H1 (cell line): ENCODE measurements at regions of chr6 and their contacts with region 1.

Region 1: GRCh38 chr6:125759184-125759902 is 9.9 kb downstream of the HEY2 start:
- DNase-seq: peak in 1 of 2 experiments; percentile 94
- H3K4me3 ChIP-seq: no peak overlapping the region
- H3K27ac ChIP-seq: no peak overlapping the region
- H3K4me1 ChIP-seq: peaks cover 0 to 3% (median 0%) of the 10 kb centered on the region in 4 experiments; a peak in 1 of 7 replicates
- H3K27me3 ChIP-seq: no peaks in the 10 kb centered on the region
- CTCF ChIP-seq: peak; percentile 65 to 94 (median 83)
- EP300 ChIP-seq: no peak
- POLR2A ChIP-seq: no peak
- RAD21 ChIP-seq: peak; percentile 76 to 81

Region 2: GRCh38 chr6:125586074-125586473 is 173.3 kb before region 1 on chr6:
- CTCF ChIA-PET with region 1: interaction called, 11 read pairs
- POLR2A ChIA-PET with region 1: no interaction called
- DNase-seq: no peak
- H3K4me3 ChIP-seq: no peak overlapping the region
- H3K27ac ChIP-seq: no peak overlapping the region
- H3K4me1 ChIP-seq: peaks cover 0 to 12% (median 7%) of the 10 kb centered on the region in 4 experiments; a peak in 4 of 7 replicates
- H3K27me3 ChIP-seq: no peaks in the 10 kb centered on the region
- CTCF ChIP-seq: no peak
- EP300 ChIP-seq: no peak
- POLR2A ChIP-seq: no peak
- RAD21 ChIP-seq: no peak

Region 3: GRCh38 chr6:125746731-125747594 is 12.4 kb before region 1 on chr6:
- CTCF ChIA-PET with region 1: interaction called, 12 read pairs
- POLR2A ChIA-PET with region 1: interaction called, 7 read pairs
- DNase-seq: peak; percentile 64 to 72
- H3K4me3 ChIP-seq: peak overlapping the region; percentile 72 to 77 (median 76)
- H3K27ac ChIP-seq: no peak overlapping the region
- H3K4me1 ChIP-seq: peaks cover 2 to 15% (median 7%) of the 10 kb centered on the region in 4 experiments; a peak in 5 of 7 replicates
- H3K27me3 ChIP-seq: peaks cover 0 to 25% (median 16%) of the 10 kb centered on the region in 4 experiments; a peak in 6 of 7 replicates
- CTCF ChIP-seq: no peak
- EP300 ChIP-seq: peak in 1 of 2 experiments; percentile 70; a peak in 1 of 3 replicates
- POLR2A ChIP-seq: no peak; a peak in 2 of 3 replicates
- RAD21 ChIP-seq: 0 out of 4 replicates have a peak, but pooled peaks of 1 of the 2 experiments have one; percentile 15

Region 4: GRCh38 chr6:125882243-125882642 is 122.9 kb after region 1 on chr6:
- CTCF ChIA-PET with region 1: no interaction called
- POLR2A ChIA-PET with region 1: no interaction called
- DNase-seq: no peak
- H3K4me3 ChIP-seq: no peak overlapping the region
- H3K27ac ChIP-seq: no peak overlapping the region
- H3K4me1 ChIP-seq: no peaks in the 10 kb centered on the region
- H3K27me3 ChIP-seq: no peaks in the 10 kb centered on the region
- CTCF ChIP-seq: no peak
- EP300 ChIP-seq: no peak
- POLR2A ChIP-seq: no peak
- RAD21 ChIP-seq: no peak